ENCODE measurements at regions of chr4 and their contacts with region 1.

Region 1: GRCh38 chr4:81405894-81406401 is 65.8 kb downstream of the RASGEF1B start:
- ATAC-seq: peak; percentile 71 to 85 (median 79)
- H3K4me3 ChIP-seq: peak overlapping the region; percentile 17 to 37 (median 21)
- H3K27ac ChIP-seq: no peak overlapping the region
- H3K4me1 ChIP-seq: no peaks in the 10 kb centered on the region

Region 2: DNA sequence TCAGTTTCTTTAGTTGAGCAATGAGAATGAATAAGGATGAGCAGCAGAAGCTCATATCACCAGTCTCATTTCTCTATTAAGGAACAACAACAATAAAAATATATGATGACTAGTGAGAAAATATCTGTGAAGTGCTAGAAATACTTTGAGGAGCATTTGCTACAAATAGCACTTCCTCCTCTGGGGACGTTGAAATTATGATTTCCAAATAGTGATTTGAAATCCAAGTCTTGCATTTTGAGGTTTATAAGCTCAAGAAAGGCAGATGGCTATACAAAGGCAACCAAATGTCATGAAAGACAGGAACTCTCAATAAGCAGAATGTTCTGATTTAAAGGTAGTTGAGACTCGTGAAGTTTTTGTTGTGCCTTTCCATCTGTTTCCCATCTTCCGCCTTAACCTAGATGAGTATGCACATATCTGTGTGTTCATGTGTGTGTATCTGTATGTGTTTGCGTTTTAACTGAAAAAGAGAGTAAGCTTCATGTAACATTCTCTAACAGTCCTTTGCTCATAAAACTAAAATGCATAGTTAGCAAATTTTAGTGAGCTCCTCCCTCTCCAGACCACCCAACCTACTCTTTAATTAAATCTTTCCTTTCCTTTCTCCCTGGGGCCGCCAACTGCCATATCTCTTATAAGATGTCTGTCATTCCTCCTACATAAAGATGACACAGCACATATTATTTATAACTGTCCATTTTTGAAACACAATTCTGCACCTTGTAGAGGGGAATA is 288.4 kb after region 1 on chr4:
- in situ Hi-C with region 1: no loop called
- ATAC-seq: no peak
- H3K4me3 ChIP-seq: no peak overlapping the region
- H3K27ac ChIP-seq: no peak overlapping the region
- H3K4me1 ChIP-seq: peaks cover 14 to 17% of the 10 kb centered on the region in 2 donors

Region 3: DNA sequence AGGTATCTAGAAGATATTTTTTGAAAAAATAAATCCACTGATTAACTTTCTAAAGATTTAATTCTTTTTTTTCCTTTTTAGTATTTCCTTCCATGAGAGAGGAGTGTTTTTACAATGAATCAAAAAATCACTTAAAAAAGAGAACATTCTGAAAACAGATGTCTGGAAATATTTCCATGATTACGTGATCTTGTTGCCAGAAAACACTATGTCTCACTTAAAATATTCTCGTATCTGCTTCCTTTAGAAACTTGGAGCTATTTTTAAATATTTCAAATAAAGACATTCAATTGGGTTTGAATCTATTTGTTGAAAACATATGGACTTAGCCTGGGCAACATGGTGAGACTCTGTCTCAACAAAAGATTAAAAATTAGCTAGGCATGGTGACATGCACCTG is 298.5 kb after region 1 on chr4:
- in situ Hi-C with region 1: no loop called
- ATAC-seq: no peak
- H3K4me3 ChIP-seq: no peak overlapping the region
- H3K27ac ChIP-seq: no peak overlapping the region
- H3K4me1 ChIP-seq: peaks cover 8 to 25% of the 10 kb centered on the region in 2 donors

Region 4: DNA sequence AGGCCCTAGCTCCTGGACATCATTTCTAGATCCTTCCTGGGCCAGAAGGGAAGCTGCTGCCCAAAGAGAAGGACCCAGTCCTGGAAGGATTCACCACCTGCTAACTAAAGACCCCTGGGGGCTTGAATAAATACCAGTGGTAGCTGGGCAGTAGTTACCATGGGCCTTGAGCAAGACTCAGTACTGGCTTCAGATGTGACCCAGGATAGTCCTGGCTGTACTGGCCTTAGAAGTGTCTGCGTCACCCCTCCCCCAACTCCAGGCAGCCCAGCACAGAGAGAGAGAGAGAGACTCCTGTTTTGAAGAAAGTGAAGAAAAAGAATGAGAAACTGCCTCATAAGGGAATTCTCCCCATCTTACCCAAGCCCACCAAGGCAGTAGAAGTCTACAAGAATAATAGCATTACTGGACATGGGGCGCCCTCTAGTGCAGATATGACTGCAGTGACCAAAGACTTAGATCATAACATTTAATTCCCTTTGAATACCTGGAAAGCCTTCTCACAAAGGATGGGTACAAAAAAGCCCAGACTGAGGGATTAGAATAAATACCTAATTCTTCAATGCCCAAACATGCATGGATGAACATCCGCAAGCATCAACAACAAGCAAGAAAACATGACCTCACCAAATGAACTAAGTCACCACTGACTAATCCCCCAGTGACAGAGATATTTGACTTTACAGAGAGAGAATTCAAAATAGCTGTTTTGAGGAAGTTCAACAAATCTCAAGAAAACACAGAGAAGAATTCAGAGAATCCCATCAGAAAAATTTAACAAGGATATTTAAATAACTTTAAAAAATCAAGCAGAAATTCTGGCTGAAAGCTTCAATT is 796.1 kb after region 1 on chr4:
- in situ Hi-C with region 1: loop called in 2 of 9 experiments (anchors 25 kb)
- ATAC-seq: peak; percentile 43 to 74 (median 58)
- H3K4me3 ChIP-seq: no peak overlapping the region
- H3K27ac ChIP-seq: no peak overlapping the region
- H3K4me1 ChIP-seq: no peaks in the 10 kb centered on the region

Region 5: GRCh38 chr4:82268050-82268825 is 862.3 kb after region 1 on chr4:
- in situ Hi-C with region 1: loop called in 3 of 9 experiments (anchors 10 to 25 kb)
- ATAC-seq: peak; percentile 97 to 100 (median 99)
- H3K4me3 ChIP-seq: no peak overlapping the region
- H3K27ac ChIP-seq: peak overlapping the region in 1 of 2 donors; percentile 15
- H3K4me1 ChIP-seq: peaks cover 7% of the 10 kb centered on the region in 2 donors

Region 6: GRCh38 chr4:82275431-82276331 is 869.7 kb after region 1 on chr4:
- in situ Hi-C with region 1: loop called in 2 of 9 experiments (anchors 10 to 25 kb)
- ATAC-seq: peak in 1 of 8 experiments; percentile 31
- H3K4me3 ChIP-seq: no peak overlapping the region
- H3K27ac ChIP-seq: no peak overlapping the region
- H3K4me1 ChIP-seq: no peaks in the 10 kb centered on the region